Left colon (tissue), 2 donors: ENCODE measurements at regions of chr9 and their contacts with region 1.

Region 1: DNA sequence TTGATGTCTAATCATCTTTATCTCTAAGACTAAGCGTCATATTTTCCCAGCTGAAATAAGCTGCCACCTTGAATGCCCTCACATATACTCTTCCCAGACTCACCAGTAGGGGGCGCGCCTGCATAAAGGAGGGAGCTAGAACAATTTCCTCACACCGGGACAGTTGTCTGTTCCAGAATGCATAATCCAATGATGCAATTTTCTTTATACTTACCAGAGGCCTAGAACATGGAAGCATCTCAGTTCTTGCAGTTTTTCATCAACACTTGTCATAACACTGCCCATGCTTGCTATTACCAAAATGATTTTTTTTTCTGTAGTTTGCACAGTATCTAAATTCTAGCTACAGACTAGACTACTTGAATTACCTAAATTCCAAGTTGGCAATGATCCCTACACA is 203.9 kb downstream of the FRMD3 start:
- DNase-seq: peak; percentile 60 to 87
- ATAC-seq: peak; percentile 96

Region 2: GRCh38 chr9:83544002-83544698 is 209.8 kb after region 1 on chr9:
- intact Hi-C with region 1: loop called in 1 of 2 experiments (anchors 10 kb)
- DNase-seq: peak; percentile 30 to 51
- ATAC-seq: peak; percentile 100